ENCODE measurements at regions of chr22 and their contacts with region 1.

Region 1: DNA sequence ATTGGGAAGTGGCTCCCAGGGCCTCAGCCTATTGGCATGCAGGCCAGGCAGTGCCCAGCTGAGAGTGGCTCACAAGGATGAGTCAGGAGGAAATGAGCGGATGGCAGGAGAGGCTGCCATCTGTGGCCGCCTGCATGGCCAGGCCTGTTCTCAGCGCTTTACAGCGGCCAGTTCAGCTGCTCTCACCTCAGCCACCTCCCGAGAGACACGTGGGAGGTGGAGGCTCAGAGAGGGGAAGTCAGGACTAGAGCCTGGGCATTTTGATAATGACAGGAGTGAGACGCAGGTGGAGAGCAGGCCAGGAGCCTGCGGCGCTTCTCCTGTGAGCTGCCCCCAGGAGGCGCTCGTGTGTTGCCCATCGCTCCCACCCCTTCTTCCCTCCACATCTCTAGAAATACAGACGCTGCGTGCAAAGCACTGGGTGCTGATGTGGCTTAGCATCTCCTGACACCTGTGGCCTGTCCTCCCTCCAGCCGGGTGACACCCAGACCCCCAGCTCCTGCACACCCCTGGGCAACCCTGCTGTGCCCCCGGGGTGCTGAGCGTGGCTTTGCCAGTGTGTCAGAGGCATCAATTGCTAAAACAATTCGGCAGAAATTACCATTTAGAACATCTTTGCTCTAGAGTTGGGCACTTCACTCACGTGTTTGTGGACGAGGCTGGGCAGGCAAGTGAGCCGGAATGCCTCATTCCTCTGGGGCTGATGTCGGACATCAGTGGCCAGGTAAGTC is 21.4 kb upstream of the PANX2 start:
- DNase-seq: peak; percentile 61
- ATAC-seq: peak; percentile 94
- H3K4me3 ChIP-seq: no peak overlapping the region
- H3K27ac ChIP-seq: peak overlapping the region; percentile 44
- H3K4me1 ChIP-seq: peaks cover 3 to 9% of the 10 kb centered on the region in 2 experiments; a peak in 2 of 4 replicates
- H3K27me3 ChIP-seq: no peaks in the 10 kb centered on the region
- CTCF ChIP-seq: peak; percentile 91 to 94 (median 93)
- POLR2A ChIP-seq: no peak
- RAD21 ChIP-seq: peak; percentile 97

Region 2: GRCh38 chr22:50209893-50210292 is 60.7 kb after region 1 on chr22:
- CTCF ChIA-PET with region 1: interaction called, 7 read pairs
- POLR2A ChIA-PET with region 1: no interaction called
- RAD21 ChIA-PET with region 1: no interaction called
- intact Hi-C with region 1: loop called (anchors 1 kb)
- DNase-seq: no peak
- ATAC-seq: peak; percentile 67
- H3K4me3 ChIP-seq: no peak overlapping the region
- H3K27ac ChIP-seq: no peak overlapping the region; the same call in 1 of the 2 replicates
- H3K4me1 ChIP-seq: peaks cover 0 to 16% of the 10 kb centered on the region in 2 experiments; a peak in 2 of 4 replicates
- H3K27me3 ChIP-seq: no peaks in the 10 kb centered on the region
- CTCF ChIP-seq: peak; percentile 75 to 89 (median 89)
- POLR2A ChIP-seq: no peak
- RAD21 ChIP-seq: peak; percentile 71

Region 3: DNA sequence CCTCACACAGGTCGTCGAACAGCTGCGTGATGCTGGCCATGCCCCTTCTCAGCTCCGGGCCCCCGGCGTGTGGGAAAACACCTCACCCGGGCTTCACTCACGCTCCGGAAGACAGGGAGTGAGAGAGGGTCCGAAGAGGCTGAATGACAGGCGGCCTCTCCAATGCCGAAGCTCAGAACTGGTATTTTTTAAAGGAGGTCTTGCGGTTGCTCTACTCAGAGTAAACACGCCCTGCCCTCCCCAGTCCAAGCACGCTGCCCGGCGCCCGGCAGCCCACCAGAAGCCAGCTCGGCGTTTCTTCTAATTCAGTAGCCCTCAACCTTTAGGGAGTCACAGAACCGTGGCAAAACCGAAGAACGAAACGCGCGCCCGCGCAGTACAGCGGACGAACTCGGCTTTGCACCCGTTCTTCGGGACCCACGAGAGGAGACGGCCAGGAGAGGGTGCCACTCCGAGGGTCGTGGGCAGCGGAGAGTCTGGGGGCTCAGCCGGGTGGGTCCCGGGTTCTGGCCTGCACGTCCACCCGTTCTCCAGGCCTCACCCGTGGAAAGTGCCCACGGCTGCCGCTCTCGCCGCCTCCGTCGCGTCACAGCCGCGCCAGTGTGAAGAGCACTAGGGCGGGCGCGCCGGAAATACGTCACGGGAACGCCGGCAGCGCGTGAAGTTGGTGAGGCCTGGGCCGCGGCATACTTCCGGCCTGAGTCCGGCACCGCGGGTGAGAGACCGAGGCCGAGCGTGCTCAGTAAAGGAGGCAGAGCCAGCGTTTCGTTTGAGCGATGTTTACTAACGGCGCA is 95.5 kb after region 1 on chr22 and contains the start of gene TUBGCP6:
- CTCF ChIA-PET with region 1: interaction called, 4 read pairs
- POLR2A ChIA-PET with region 1: no interaction called
- RAD21 ChIA-PET with region 1: interaction called in 1 of 2 experiments, 3 read pairs
- intact Hi-C with region 1: loop called (anchors 1 kb)
- DNase-seq: peak; percentile 83
- ATAC-seq: peak; percentile 77
- H3K4me3 ChIP-seq: peak within 1 kb of the TSS; percentile 93 to 95
- H3K27ac ChIP-seq: peak within 1 kb of the TSS; percentile 81
- H3K4me1 ChIP-seq: peaks cover 23 to 60% of the 10 kb centered on the region in 2 experiments
- H3K27me3 ChIP-seq: no peaks in the 10 kb centered on the region
- CTCF ChIP-seq: peak in 2 of 3 experiments; percentile 33 to 35; a peak in 4 of 6 replicates
- POLR2A ChIP-seq: peak; percentile 73
- RAD21 ChIP-seq: no peak
- total RNA-seq, gene TUBGCP6: 38.6 TPM

Measured in HCT116 (cell line).